ENCODE measurements at regions of chr11 and their contacts with region 1.

Region 1: DNA sequence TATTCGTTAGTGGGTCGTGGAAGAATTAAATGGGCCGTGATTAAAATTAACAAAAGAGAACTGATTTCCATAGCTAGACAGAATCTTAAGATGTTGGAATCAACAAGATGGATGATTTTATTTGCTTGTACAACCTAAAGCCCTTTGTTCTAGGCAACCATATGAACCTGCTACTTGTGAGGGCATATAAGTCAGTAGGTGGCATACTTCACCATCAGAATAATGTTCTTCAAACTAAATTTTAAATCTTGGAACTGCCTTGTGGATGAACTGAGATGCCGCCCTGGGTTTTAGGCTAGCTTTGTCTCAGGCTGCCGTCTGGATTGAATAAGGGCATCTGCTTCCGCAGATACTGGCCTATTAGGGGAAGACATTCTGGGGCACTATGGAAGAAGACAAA is 40.9 kb downstream of the CSRP3 start:
- DNase-seq: no peak
- H3K4me3 Mint-ChIP-seq: no peak overlapping the region
- H3K27ac Mint-ChIP-seq: no peak overlapping the region
- H3K4me1 Mint-ChIP-seq: peaks cover 16% of the 10 kb centered on the region
- H3K27me3 Mint-ChIP-seq: no peaks in the 10 kb centered on the region

Region 2: GRCh38 chr11:19071255-19071654 is 89.6 kb before region 1 on chr11:
- intact Hi-C with region 1: loop called (anchors 10 kb)
- DNase-seq: peak; percentile 26
- H3K4me3 Mint-ChIP-seq: peak overlapping the region; percentile 22
- H3K27ac Mint-ChIP-seq: no peak overlapping the region
- H3K4me1 Mint-ChIP-seq: peaks cover 2% of the 10 kb centered on the region
- H3K27me3 Mint-ChIP-seq: peaks cover 21% of the 10 kb centered on the region